ENCODE measurements at regions of chr1 and their contacts with region 1.

Region 1: DNA sequence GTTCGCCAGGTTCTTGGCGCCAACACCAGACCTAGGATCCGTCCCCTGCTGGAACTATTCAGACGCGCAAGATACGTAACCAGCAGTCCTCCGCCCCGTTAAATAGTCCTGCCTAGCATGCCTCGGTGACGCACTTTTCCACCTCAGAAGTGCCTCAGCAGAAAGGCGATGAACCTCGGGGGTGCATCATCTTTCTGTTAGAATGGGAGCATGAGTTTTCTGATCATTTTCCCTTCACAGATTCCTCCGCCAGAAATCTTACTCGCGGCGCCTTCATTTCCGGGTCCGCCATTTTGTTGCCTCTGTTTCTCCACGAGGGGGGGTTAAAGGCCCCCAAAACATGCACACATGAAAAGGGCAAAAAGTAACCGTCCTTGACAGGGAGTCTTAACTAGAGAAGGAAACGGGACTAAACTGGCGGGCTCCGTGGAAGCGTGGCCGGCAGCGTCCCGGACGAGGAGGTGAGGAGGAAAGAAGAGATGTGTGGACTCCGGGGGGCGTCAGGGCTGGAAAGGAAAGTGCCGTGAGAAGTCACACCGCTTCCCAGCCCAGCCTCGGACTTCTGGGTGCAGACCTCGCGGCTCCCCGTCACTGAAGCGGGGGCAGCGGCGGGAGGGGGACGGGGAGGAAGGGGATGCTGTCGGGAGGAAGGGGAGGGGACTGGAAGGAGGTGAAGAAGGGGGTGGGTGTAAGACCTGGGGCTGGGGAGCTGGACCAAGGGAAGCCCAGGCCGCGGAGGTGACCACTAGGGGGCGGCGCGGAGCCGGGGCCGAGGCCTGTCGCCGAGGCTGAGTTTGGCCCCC is at the start of gene GABPB2:
- DNase-seq: peak; percentile 89 to 97
- ATAC-seq: peak; percentile 94 to 95
- H3K4me3 ChIP-seq: peak within 1 kb of the TSS; percentile 74
- H3K27ac ChIP-seq: peak within 1 kb of the TSS; percentile 94 to 99
- H3K4me1 ChIP-seq: peaks cover 15% of the 10 kb centered on the region
- CTCF ChIP-seq: peak; percentile 89
- EP300 ChIP-seq: no peak
- POLR2A ChIP-seq: peak; percentile 77
- RAD21 ChIP-seq: peak; percentile 44 to 56; a peak in 3 of 5 replicates
- polyA plus RNA-seq, gene GABPB2: 9.9 and 10.8 TPM in 2 replicates

Region 2: GRCh38 chr1:151047925-151048645 is 22.6 kb before region 1 on chr1:
- CTCF ChIA-PET with region 1: interaction called, 15 read pairs
- POLR2A ChIA-PET with region 1: interaction called, 7 read pairs
- DNase-seq: peak; percentile 83 to 96
- ATAC-seq: peak; percentile 87 to 91
- H3K4me3 ChIP-seq: peak overlapping the region; percentile 80
- H3K27ac ChIP-seq: peak overlapping the region; percentile 94 to 96
- H3K4me1 ChIP-seq: peaks cover 16% of the 10 kb centered on the region
- CTCF ChIP-seq: peak; percentile 67; the same call in 2 of the 3 replicates
- EP300 ChIP-seq: no peak
- POLR2A ChIP-seq: peak; percentile 53; the same call in 1 of the 2 replicates
- RAD21 ChIP-seq: peak in 1 of 2 experiments; percentile 17; a peak in 1 of 5 replicates

Region 3: DNA sequence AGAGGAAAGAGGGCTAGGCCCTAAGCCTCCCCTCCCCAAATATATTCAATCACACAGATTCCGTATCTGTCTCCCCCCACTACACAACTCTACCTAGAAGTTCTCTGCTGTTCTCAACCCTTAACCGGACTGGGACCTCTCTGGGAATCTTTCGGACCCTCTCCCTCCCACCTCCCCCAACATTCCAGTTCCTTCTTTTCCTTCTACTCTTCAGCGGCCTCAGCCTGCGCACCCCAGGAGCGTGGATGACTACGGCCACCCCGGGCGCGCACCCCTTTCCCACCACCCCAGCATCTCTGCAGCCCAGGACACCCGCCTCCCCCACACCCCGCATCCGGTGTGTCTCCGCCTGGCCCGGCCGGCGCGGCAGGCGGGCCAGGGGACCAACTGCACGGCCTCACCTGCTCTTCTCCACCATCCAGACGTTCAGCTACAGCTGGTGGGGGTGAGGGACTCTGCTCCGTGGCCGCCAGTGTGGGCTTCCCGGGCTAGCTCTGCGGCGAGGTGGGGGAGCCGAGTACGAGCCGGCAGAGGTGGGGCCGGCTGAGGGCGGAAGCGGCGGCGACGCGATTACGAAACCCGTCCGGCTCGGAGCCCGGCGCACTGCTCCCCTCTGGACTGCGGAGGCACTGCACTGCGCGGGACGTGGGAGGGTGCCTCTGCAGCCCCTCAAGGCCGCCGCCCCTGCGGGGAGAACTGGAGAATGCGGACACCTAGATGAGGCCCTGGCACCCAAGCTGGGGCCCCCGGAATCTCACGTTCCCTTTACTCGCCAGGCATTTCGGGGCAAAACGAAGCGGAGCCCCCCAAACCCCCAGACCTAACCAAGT is 11.4 kb before region 1 on chr1 and contains the start of gene CDC42SE1:
- CTCF ChIA-PET with region 1: interaction called, 86 read pairs
- POLR2A ChIA-PET with region 1: interaction called, 11 read pairs
- DNase-seq: peak; percentile 88 to 94
- ATAC-seq: peak; percentile 90 to 93
- H3K4me3 ChIP-seq: peak within 1 kb of the TSS; percentile 90
- H3K27ac ChIP-seq: peak within 1 kb of the TSS; percentile 98 to 100
- H3K4me1 ChIP-seq: peaks cover 49% of the 10 kb centered on the region
- CTCF ChIP-seq: peak; percentile 42; the same call in 2 of the 3 replicates
- EP300 ChIP-seq: no peak
- POLR2A ChIP-seq: peak; percentile 68
- RAD21 ChIP-seq: peak in 1 of 2 experiments; percentile 27; a peak in 3 of 5 replicates
- polyA plus RNA-seq, gene CDC42SE1: 78.1 and 83.1 TPM in 2 replicates

Region 4: DNA sequence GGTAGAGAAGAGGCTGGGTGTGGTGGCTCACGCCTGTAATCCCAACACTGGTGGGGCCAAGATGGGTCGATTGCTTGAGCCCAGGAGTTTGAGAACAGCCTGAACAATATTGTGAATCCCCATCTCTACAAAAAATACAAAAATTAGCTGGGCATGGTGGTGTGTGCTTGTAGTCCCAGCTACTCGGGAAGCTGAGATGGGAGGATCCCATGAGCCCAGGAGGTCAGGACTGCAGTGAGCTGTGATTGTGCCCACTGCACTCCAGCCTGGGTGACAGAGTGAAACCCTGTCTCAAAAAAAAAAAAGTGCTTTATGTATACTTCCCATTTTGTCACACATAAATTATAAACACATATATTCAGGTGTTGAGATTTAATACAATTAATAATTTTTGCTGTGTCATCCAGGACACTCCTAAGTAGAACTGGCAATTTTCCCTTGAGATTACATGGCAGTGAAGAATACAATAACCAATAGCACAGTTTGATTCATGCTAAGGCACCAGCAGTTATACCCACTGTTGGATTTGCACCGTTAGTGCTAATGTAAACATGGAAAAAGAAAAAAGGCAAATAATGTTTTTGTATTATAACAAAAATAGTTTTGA is 15.4 kb after region 1 on chr1:
- CTCF ChIA-PET with region 1: interaction called, 21 read pairs
- POLR2A ChIA-PET with region 1: interaction called, 3 read pairs
- DNase-seq: no peak
- ATAC-seq: peak in 1 of 2 experiments; percentile 64; a peak in 3 of 6 replicates
- H3K4me3 ChIP-seq: no peak overlapping the region
- H3K27ac ChIP-seq: peak overlapping the region; percentile 44 to 71
- H3K4me1 ChIP-seq: peaks cover 9% of the 10 kb centered on the region
- CTCF ChIP-seq: no peak
- EP300 ChIP-seq: no peak
- POLR2A ChIP-seq: no peak
- RAD21 ChIP-seq: no peak

Region 5: GRCh38 chr1:151098126-151098525 is 27.5 kb after region 1 on chr1:
- CTCF ChIA-PET with region 1: interaction called, 23 read pairs
- POLR2A ChIA-PET with region 1: interaction called, 4 read pairs
- DNase-seq: no peak
- ATAC-seq: no peak
- H3K4me3 ChIP-seq: no peak overlapping the region
- H3K27ac ChIP-seq: no peak overlapping the region
- H3K4me1 ChIP-seq: no peaks in the 10 kb centered on the region
- CTCF ChIP-seq: no peak
- EP300 ChIP-seq: no peak
- POLR2A ChIP-seq: no peak
- RAD21 ChIP-seq: no peak

Region 6: DNA sequence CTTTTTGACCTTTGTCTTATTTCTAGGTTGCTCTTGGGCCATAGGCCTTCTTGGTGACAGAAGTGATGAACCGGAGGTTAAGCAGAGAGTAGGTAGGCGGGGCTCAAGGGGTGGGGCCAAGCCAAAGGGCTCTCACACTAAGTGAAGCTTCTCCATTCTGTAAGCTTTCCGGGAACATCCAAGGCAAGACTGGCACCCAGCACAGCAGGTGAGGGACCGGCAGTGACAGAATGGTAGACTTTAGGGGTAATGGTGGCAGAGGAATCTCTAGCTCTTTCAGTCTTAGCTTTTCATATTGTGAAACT is 85.8 kb after region 1 on chr1 and contains the start of gene TNFAIP8L2:
- CTCF ChIA-PET with region 1: interaction called, 13 read pairs
- POLR2A ChIA-PET with region 1: interaction called, 4 read pairs
- DNase-seq: no peak
- ATAC-seq: peak; percentile 72 to 82
- H3K4me3 ChIP-seq: no peak within 1 kb of the TSS
- H3K27ac ChIP-seq: no peak within 1 kb of the TSS
- H3K4me1 ChIP-seq: no peaks in the 10 kb centered on the region
- CTCF ChIP-seq: no peak
- EP300 ChIP-seq: no peak
- POLR2A ChIP-seq: no peak
- RAD21 ChIP-seq: no peak
- polyA plus RNA-seq, gene TNFAIP8L2: not detected in 2 replicates